MCF 10A (cell line): ENCODE measurements at regions of chr7 and their contacts with region 1.

Region 1: DNA sequence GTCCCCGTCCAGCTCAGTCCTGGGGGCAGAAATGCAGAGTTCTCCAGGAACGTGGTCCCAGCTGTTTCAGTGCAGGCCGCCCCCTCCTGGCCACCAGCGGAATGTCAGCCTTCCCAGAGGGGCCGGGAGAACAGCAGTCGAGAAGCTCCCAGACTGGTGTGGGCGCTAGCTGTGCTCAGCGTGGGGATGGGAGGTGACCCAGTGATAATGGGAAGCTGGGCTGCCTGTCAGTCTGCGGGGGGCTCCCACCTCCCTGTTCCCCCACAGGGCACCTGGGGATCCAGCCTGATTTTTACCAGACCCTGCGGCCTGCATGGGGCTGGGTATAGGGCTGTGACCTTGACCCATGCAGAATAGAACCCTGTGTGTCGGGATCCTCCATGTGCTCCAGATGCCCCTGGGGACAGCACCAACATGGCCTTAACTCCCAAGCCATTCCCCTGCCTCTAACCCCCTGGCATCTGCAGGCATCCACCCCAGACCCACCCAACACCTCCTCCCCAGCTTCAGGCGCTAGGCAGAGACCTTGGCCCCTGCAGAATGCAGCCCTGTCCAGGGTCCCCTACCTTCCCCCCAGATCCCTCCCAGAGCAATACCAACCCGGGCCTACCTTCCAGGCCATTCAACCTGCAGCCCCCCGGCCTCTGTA is 946 bp upstream of the ELN start:
- DNase-seq: peak; percentile 60
- H3K4me3 Mint-ChIP-seq: no peak overlapping the region
- H3K27ac Mint-ChIP-seq: no peak overlapping the region
- H3K4me1 Mint-ChIP-seq: peaks cover 20% of the 10 kb centered on the region
- H3K27me3 Mint-ChIP-seq: peaks cover 33% of the 10 kb centered on the region
- CTCF ChIP-seq: peak; percentile 92

Region 2: DNA sequence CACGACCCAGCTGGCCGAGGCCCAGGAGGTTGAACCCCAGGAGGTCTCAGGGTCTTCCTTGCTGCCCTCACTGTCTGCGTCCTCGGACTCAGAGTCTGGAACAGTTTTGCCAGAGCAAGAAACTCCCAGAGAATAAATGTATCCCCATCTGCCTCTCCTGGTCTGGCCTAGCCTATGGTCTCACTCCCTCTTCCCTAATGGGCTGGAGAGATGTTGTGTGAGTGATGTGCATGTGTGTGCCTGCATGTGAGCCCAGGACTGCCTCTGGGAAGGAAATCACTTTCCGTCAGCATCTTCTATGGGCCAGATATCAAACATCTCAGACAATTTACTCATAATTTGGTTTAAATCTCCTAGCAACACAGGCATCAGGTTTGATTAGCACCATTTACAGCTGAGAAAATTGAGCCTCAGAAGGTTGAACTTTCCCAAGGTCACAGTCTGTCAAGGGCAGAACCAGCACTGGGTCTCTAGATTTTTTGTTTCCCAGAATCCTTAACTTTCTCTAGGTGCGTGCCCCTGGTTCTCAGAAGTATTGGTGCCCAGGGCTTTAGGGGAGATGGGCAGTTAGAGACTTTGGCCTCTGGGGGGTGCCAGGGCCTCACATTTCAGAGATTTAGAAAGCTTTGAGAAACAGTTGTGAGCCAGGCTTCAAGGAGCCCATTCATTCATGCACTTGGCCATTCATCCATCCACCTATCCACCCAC is 161.1 kb before region 1 on chr7:
- CTCF ChIA-PET with region 1: interaction called, 43 read pairs
- POLR2A ChIA-PET with region 1: interaction called, 4 read pairs
- intact Hi-C with region 1: loop called (anchors 1 kb)
- DNase-seq: peak; percentile 68
- H3K4me3 Mint-ChIP-seq: no peak overlapping the region
- H3K27ac Mint-ChIP-seq: no peak overlapping the region
- H3K4me1 Mint-ChIP-seq: no peaks in the 10 kb centered on the region
- H3K27me3 Mint-ChIP-seq: no peaks in the 10 kb centered on the region
- CTCF ChIP-seq: peak; percentile 77

Region 3: DNA sequence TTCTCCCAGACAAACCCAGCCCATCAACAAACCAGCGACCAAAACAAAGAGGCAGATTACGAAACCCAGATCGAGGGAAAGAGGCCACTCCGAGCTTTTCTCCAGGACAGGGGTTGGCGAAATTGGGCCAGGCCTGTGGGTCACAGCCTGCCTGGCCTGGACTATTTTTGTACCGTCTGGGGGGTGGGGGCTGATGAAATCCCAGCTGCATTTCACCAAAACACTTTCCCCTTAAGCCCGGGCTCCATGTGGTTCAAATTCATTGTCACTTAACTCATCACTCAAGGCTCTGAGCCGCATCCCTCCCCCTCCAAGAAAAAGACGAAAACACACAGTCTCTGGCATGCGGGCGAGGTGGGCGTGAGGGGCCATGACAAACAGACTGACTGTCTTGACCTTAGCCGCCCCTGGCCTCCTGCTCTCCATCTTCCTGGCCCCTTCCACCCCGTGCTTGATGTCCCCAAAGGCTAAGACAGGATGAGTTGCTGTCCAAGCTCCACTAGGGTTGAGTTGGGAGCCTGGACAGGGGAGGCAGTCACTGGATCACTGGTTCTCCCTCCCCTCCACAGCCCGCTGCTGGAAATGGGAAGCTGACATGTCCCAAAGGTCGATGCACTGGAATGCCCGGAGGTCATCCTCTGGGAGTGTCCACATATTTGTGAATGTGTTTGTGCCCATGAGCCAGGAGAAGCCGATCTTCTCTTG is 146.9 kb before region 1 on chr7:
- CTCF ChIA-PET with region 1: interaction called, 22 read pairs
- POLR2A ChIA-PET with region 1: no interaction called
- intact Hi-C with region 1: no loop called
- DNase-seq: no peak
- H3K4me3 Mint-ChIP-seq: no peak overlapping the region
- H3K27ac Mint-ChIP-seq: no peak overlapping the region
- H3K4me1 Mint-ChIP-seq: peaks cover 7% of the 10 kb centered on the region
- H3K27me3 Mint-ChIP-seq: no peaks in the 10 kb centered on the region
- CTCF ChIP-seq: no peak

Region 4: DNA sequence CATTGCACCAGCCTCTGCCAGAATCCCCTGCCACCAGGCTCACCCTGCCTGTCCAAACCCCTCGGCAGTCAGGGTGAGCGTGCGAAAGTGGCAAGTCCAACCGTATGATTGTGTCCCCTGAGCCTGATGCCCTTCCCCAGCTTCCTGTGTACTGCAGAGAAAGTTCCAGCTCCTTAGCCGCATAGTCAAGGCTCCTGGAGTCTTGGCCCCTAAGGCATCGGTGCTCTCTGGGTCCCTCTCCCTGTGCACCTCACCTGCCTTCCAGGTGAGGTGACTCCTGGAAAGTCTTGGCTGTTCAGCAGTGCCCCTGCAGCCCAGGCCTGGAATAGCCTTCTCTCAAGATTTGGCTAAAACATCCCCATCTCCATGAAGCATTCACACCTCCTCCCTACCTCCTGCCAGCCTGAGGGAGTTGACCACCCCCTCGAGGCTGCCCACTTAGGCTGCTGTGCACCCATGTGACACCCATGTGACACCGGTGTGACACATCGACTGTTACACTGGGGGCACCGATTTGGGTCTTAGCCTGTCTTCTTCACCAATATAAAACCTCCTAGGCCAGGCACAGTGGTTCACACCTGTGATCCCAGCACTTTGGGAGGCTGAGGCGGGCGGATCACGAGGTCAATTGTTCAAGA is 55.2 kb before region 1 on chr7:
- CTCF ChIA-PET with region 1: interaction called, 10 read pairs
- POLR2A ChIA-PET with region 1: no interaction called
- intact Hi-C with region 1: no loop called
- DNase-seq: peak; percentile 36
- H3K4me3 Mint-ChIP-seq: no peak overlapping the region
- H3K27ac Mint-ChIP-seq: peak overlapping the region; percentile 16
- H3K4me1 Mint-ChIP-seq: no peaks in the 10 kb centered on the region
- H3K27me3 Mint-ChIP-seq: peaks cover 14% of the 10 kb centered on the region
- CTCF ChIP-seq: peak; percentile 8

Region 5: DNA sequence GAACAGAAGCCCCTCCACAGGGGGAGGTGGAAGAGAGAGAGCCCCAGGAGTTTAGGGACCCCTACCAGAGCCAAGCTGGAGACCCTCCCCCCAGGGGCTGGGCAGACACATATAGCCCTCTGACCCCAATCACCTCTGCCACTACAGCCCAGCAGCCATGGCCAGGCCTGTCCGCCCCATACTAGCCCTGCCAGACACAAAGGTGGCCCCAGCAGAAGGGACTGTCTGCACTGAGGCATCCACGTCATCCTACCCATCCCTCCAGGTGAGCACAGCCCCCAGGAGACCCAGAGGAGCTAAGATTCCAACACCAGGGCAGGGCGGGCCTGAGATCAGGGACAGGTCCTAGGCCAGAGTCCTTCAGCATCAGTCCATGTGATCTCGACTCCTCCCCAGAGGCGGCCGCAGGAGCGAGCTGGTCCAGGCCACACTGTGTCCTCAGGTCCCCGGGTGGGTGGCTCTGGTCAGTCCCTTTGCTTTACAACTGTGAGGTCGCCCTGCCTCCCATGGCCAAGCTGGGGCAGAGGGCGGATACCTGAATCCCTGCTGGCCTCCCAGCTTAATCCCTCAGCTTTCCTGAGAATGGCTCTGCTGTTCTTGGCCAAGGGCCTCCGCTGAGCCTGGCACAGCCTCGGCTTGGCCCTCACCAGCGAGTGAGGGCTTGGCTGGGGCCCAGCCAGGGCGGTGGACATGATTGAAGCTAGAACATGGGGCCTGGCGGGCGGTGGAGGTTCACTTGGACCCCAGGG is 13.3 kb before region 1 on chr7:
- CTCF ChIA-PET with region 1: interaction called, 37 read pairs
- POLR2A ChIA-PET with region 1: no interaction called
- intact Hi-C with region 1: no loop called
- DNase-seq: peak; percentile 74
- H3K4me3 Mint-ChIP-seq: no peak overlapping the region
- H3K27ac Mint-ChIP-seq: no peak overlapping the region
- H3K4me1 Mint-ChIP-seq: no peaks in the 10 kb centered on the region
- H3K27me3 Mint-ChIP-seq: no peaks in the 10 kb centered on the region
- CTCF ChIP-seq: no peak

Region 6: GRCh38 chr7:74039346-74039745 is 12.3 kb after region 1 on chr7:
- CTCF ChIA-PET with region 1: interaction called, 45 read pairs
- POLR2A ChIA-PET with region 1: no interaction called
- intact Hi-C with region 1: no loop called
- DNase-seq: peak; percentile 30
- H3K4me3 Mint-ChIP-seq: no peak overlapping the region
- H3K27ac Mint-ChIP-seq: no peak overlapping the region
- H3K4me1 Mint-ChIP-seq: peaks cover 6% of the 10 kb centered on the region
- H3K27me3 Mint-ChIP-seq: no peaks in the 10 kb centered on the region
- CTCF ChIP-seq: no peak

Region 7: DNA sequence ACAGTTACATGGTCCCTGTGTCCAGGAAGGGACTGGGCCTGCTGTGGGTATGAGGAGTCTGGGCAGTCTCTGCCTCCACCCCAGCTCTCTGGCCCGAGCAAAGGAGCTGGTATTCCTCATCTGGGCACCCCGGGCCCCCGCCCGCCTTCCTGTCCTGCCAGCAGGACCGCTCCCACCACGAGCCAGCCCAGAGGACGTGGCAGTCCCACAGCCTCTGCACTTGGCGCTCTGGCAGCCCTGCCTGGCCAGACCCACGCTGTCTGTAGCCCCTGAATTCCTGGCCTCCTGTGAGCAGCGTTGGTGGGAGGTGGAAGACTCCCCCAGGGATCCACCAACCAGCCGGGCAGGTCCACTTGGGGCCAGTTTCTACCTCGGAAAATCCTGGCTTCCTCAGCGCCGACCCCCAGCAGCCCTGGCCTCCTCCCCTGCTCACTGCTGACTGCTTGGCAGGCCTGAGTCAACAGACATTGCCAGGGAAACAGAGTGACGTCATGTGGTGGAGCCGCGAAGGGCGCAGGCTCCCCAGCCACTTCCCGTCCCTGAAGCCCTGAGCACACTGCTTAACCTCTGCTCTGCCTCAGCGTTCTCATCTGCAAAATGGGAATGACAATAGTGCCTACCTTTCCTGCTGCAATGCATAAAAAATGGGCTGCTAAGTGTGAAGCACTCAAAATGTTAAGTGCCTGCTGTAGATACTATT is 35.0 kb after region 1 on chr7:
- CTCF ChIA-PET with region 1: interaction called, 16 read pairs
- POLR2A ChIA-PET with region 1: interaction called, 7 read pairs
- intact Hi-C with region 1: no loop called
- DNase-seq: peak; percentile 80
- H3K4me3 Mint-ChIP-seq: peak overlapping the region; percentile 42
- H3K27ac Mint-ChIP-seq: peak overlapping the region; percentile 89
- H3K4me1 Mint-ChIP-seq: peaks cover 24% of the 10 kb centered on the region
- H3K27me3 Mint-ChIP-seq: peaks cover 14% of the 10 kb centered on the region
- CTCF ChIP-seq: no peak

Region 8: DNA sequence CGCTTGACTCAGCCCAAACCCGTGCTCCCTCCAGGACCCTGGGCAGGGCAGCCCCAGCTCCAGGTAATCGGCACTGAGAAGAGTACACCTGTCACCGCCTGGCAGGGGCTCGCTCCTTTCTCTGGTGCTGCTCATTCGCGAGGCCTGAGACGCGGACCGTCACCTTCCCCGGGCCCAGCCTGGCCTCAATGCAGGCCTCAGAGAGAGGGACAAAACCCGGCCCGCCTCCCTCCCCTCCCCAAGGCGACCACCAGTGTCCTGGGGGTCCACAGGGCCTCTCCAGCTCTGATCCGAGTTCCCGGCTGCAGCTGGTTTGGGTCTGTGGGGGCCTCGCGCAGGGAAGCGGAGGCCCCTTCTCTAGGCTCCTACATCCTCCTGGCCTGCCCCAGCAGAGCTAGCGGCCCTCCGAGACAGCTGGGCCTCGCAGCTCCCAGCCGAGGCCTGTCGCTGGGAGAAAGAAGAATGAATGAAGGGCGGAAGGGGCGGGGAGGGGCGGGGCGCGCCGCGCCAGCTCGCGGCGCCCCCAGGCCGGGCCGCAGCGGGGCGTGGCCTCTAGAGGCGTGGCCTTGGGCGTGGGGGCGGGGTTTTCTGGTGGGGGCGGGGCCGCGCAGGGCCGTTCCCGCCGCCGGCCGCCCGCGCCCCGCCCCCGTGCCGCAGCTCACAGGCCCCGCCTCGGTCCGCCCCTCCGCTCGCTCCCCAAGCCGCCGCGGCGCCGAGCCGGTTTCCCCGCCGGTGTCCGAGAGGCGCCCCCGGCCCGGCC is 56.3 kb after region 1 on chr7 and contains the start of gene LIMK1:
- CTCF ChIA-PET with region 1: no interaction called
- POLR2A ChIA-PET with region 1: no interaction called
- intact Hi-C with region 1: no loop called
- DNase-seq: peak; percentile 68
- H3K4me3 Mint-ChIP-seq: peak within 1 kb of the TSS; percentile 78
- H3K27ac Mint-ChIP-seq: peak within 1 kb of the TSS; percentile 89
- H3K4me1 Mint-ChIP-seq: peaks cover 21% of the 10 kb centered on the region
- H3K27me3 Mint-ChIP-seq: no peaks in the 10 kb centered on the region
- CTCF ChIP-seq: no peak
- total RNA-seq, gene LIMK1: 21.4 and 23.4 TPM in 2 replicates